Naive thymus-derived CD4-positive, alpha-beta T cell (primary cell): ENCODE measurements at regions of chr15 and their contacts with region 1.

Region 1: DNA sequence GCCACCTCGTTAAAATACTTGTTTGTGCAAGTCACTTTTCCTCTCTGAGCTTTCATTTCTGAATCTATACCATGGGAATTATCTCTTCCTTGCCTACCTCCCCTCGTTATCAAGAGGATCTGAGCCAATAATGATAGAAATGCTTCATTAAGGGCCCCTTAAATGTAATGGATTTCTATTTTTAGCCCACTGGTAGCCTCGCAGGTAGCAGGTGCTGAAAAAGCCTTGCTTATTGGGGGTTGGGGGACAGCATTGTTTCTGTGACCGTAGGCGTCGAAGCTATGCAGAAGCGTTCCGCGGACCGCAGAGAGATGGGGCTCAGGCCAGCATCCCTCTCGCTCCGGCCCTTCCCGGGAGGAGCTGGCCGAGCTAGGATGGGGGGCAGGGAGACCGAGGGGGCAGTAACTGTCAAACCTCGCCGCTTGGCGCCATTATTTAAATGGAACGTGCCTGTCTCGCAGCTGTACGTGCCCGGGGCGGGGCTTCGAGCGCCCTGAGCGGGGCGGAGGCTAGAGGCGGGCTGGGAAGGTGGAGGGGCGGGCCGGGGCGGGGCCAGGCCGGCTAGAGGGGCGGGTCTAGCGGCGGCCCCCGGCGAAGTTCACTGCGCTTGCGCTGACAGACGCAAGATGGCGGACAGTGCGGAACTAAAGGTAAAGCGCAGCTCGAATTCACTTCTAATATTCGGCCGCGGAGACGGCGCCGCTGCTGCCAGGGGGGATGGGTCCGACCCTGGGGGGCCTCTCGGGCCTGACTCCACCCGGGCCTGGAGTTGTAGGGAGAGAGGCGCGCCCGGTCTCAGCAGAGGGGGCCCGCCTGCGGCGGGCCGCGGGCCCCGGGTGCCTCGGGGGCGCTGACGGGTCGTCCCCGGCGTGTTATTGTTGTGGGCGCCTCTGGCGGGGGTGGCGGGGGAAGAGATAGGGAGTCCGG is at the start of gene PIAS1:
- DNase-seq: peak; percentile 87 to 94 (median 92)
- ATAC-seq: peak; percentile 96
- H3K4me3 ChIP-seq: peak within 1 kb of the TSS; percentile 87
- H3K4me3 Mint-ChIP-seq: peak within 1 kb of the TSS; percentile 89 to 97 (median 95)
- H3K27ac ChIP-seq: peak within 1 kb of the TSS; percentile 93
- H3K27ac Mint-ChIP-seq: peak within 1 kb of the TSS; percentile 84 to 97 (median 92)
- H3K4me1 ChIP-seq: peaks cover 21 to 35% of the 10 kb centered on the region in 2 donors
- H3K4me1 Mint-ChIP-seq: peaks cover 28 to 46% (median 39%) of the 10 kb centered on the region in 7 donors
- H3K27me3 ChIP-seq: no peaks in the 10 kb centered on the region
- H3K27me3 Mint-ChIP-seq: peaks cover 0 to 15% (median 0%) of the 10 kb centered on the region in 5 donors
- total RNA-seq, gene PIAS1: 41.3 to 103 (median 90.9) TPM

Region 2: GRCh38 chr15:66504563-66505429 is 1549.2 kb before region 1 on chr15 and contains the starts of genes RPL4 and ZWILCH:
- CTCF ChIA-PET with region 1: no interaction called
- POLR2A ChIA-PET with region 1: no interaction called
- intact Hi-C with region 1: loop called in 1 of 2 experiments (anchors 10 kb)
- DNase-seq: peak; percentile 65 to 88 (median 83)
- ATAC-seq: peak; percentile 93
- H3K4me3 ChIP-seq: peak within 1 kb of the TSS; percentile 99
- H3K4me3 Mint-ChIP-seq: peak within 1 kb of the TSS; percentile 90 to 100 (median 100)
- H3K27ac ChIP-seq: peak within 1 kb of the TSS; percentile 93
- H3K27ac Mint-ChIP-seq: peak within 1 kb of the TSS; percentile 92 to 100 (median 99)
- H3K4me1 ChIP-seq: peaks cover 13 to 22% of the 10 kb centered on the region in 2 donors
- H3K4me1 Mint-ChIP-seq: peaks cover 21 to 57% (median 41%) of the 10 kb centered on the region in 7 donors
- H3K27me3 ChIP-seq: no peaks in the 10 kb centered on the region
- H3K27me3 Mint-ChIP-seq: no peaks in the 10 kb centered on the region
- total RNA-seq, gene RPL4: 2,229 to 4,292 (median 4,136) TPM
- total RNA-seq, gene ZWILCH: 5.6 to 20.3 (median 6.8) TPM

Region 3: GRCh38 chr15:67863442-67863987 is 190.4 kb before region 1 on chr15:
- CTCF ChIA-PET with region 1: no interaction called
- POLR2A ChIA-PET with region 1: no interaction called
- intact Hi-C with region 1: loop called in 1 of 2 experiments (anchors 2 kb)
- DNase-seq: peak; percentile 49 to 77 (median 65)
- ATAC-seq: peak; percentile 99
- H3K4me3 ChIP-seq: peak overlapping the region; percentile 25
- H3K4me3 Mint-ChIP-seq: peak overlapping the region in 8 of 10 donors; percentile 28 to 81 (median 52)
- H3K27ac ChIP-seq: no peak overlapping the region
- H3K27ac Mint-ChIP-seq: no peak overlapping the region
- H3K4me1 ChIP-seq: peaks cover 0 to 5% of the 10 kb centered on the region in 2 donors
- H3K4me1 Mint-ChIP-seq: peaks cover 0 to 4% (median 3%) of the 10 kb centered on the region in 7 donors
- H3K27me3 ChIP-seq: no peaks in the 10 kb centered on the region
- H3K27me3 Mint-ChIP-seq: peaks cover 8 to 48% (median 9%) of the 10 kb centered on the region in 5 donors

Region 4: GRCh38 chr15:68032672-68033071 is 21.3 kb before region 1 on chr15:
- CTCF ChIA-PET with region 1: no interaction called
- POLR2A ChIA-PET with region 1: no interaction called
- intact Hi-C with region 1: no loop called
- DNase-seq: no peak
- ATAC-seq: no peak
- H3K4me3 ChIP-seq: no peak overlapping the region
- H3K4me3 Mint-ChIP-seq: no peak overlapping the region
- H3K27ac ChIP-seq: no peak overlapping the region
- H3K27ac Mint-ChIP-seq: no peak overlapping the region
- H3K4me1 ChIP-seq: no peaks in the 10 kb centered on the region
- H3K4me1 Mint-ChIP-seq: peaks cover 0 to 2% (median 0%) of the 10 kb centered on the region in 7 donors
- H3K27me3 ChIP-seq: peaks cover 0 to 5% of the 10 kb centered on the region in 2 donors
- H3K27me3 Mint-ChIP-seq: peaks cover 24 to 48% (median 33%) of the 10 kb centered on the region in 5 donors

Region 5: DNA sequence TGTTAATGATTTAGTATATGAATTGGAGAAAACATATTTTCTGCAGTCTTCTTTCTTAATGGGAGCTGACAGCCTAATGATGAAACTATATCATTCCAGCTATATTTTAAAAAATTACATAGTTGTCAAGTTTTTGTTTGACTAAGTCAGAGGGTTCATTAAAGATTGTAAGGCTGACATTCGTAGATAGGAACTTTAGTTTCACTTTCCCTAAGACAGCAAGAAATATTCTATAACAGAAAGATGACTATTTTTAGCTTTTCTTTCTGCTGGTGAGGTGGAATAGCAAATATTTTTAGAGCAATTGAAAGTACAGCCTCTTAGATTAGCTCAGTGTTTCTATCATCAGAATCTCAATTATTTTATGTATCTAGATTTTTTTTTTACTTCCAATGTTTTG is 60.4 kb after region 1 on chr15:
- CTCF ChIA-PET with region 1: no interaction called
- POLR2A ChIA-PET with region 1: interaction called, 4 read pairs
- intact Hi-C with region 1: loop called in 1 of 2 experiments (anchors 2 kb)
- DNase-seq: peak in 3 of 9 donors; percentile 7 to 20 (median 19)
- ATAC-seq: peak; percentile 47
- H3K4me3 ChIP-seq: peak overlapping the region; percentile 23
- H3K4me3 Mint-ChIP-seq: peak overlapping the region; percentile 27 to 81 (median 72)
- H3K27ac ChIP-seq: peak overlapping the region; percentile 39
- H3K27ac Mint-ChIP-seq: peak overlapping the region in 7 of 9 donors; percentile 0 to 79 (median 14)
- H3K4me1 ChIP-seq: peaks cover 12 to 14% of the 10 kb centered on the region in 2 donors
- H3K4me1 Mint-ChIP-seq: peaks cover 37 to 95% (median 83%) of the 10 kb centered on the region in 7 donors
- H3K27me3 ChIP-seq: no peaks in the 10 kb centered on the region
- H3K27me3 Mint-ChIP-seq: no peaks in the 10 kb centered on the region

Region 6: DNA sequence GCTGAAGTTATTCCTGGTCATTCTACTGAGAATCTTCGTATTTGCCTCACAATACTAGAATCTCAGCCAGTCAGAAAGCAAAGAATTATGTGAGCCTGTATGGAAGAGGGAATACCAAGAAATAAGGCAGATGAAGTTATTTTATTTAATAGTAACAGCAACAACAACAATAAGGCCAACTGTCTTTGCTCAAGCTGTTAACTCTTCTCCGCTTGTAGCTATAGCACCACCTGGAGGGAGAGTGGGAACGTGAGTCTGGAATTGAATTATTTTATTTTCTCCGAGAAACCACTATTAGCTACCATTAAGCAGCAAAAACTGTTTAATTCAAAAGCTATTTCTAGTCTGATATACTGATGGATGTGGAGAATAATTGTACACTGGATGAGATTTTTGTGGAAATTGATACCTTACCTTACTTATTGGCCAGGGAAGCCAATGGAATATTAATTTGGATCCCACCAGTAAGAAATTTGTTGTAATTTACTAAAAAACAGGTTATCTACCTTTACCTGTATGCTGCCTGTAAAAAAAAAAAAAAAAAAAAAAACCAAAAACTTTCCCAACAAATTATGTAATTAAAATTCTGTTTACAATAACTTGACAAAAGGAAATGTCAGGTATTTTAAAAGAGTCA is 101.1 kb after region 1 on chr15:
- CTCF ChIA-PET with region 1: no interaction called
- POLR2A ChIA-PET with region 1: interaction called, 3 read pairs
- intact Hi-C with region 1: loop called (anchors 2 to 10 kb)
- DNase-seq: peak in 6 of 9 donors; percentile 4 to 47 (median 30)
- ATAC-seq: peak; percentile 36
- H3K4me3 ChIP-seq: no peak overlapping the region
- H3K4me3 Mint-ChIP-seq: no peak overlapping the region
- H3K27ac ChIP-seq: no peak overlapping the region
- H3K27ac Mint-ChIP-seq: peak overlapping the region in 2 of 9 donors; percentile 1 to 62
- H3K4me1 ChIP-seq: no peaks in the 10 kb centered on the region
- H3K4me1 Mint-ChIP-seq: peaks cover 0 to 14% (median 6%) of the 10 kb centered on the region in 7 donors
- H3K27me3 ChIP-seq: no peaks in the 10 kb centered on the region
- H3K27me3 Mint-ChIP-seq: no peaks in the 10 kb centered on the region